ENCODE measurements at regions of chr22 and their contacts with region 1.

Region 1: GRCh38 chr22:46432164-46433068 is 96.9 kb downstream of the TRMU start:
- DNase-seq: no peak
- H3K4me3 ChIP-seq: no peak overlapping the region
- H3K27ac ChIP-seq: no peak overlapping the region
- H3K4me1 ChIP-seq: no peaks in the 10 kb centered on the region
- H3K27me3 ChIP-seq: peaks cover 18% of the 10 kb centered on the region

Region 2: DNA sequence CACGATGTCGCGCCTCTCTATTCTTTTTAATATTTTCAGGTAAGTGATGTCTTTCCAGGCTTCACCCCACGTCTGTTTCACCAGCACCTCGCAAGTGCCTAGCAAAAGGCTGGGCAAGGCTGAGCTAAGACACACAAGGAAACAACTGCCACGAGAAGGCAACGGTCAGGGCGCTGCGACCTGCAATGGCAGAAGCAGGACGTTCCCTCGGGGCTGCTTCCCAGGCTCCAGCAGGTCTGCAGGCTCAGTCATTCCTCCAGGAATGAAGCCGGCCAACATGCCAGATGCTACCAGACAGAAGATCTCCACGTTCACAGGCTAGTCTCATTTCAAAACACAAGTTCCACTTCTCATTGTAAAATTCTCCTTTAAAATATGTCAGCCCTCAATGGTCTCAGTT is 59.5 kb after region 1 on chr22:
- in situ Hi-C with region 1: loop called (anchors 10 kb)
- DNase-seq: peak; percentile 62
- H3K4me3 ChIP-seq: no peak overlapping the region
- H3K27ac ChIP-seq: no peak overlapping the region
- H3K4me1 ChIP-seq: no peaks in the 10 kb centered on the region
- H3K27me3 ChIP-seq: peaks cover 12% of the 10 kb centered on the region; the same call in 1 of the 2 replicates